Activated naive CD4-positive, alpha-beta T cell treated with anti-CD3 and anti-CD28 coated beads for 36 hours (primary cell): ENCODE measurements at regions of chr6 and their contacts with region 1.

Region 1: DNA sequence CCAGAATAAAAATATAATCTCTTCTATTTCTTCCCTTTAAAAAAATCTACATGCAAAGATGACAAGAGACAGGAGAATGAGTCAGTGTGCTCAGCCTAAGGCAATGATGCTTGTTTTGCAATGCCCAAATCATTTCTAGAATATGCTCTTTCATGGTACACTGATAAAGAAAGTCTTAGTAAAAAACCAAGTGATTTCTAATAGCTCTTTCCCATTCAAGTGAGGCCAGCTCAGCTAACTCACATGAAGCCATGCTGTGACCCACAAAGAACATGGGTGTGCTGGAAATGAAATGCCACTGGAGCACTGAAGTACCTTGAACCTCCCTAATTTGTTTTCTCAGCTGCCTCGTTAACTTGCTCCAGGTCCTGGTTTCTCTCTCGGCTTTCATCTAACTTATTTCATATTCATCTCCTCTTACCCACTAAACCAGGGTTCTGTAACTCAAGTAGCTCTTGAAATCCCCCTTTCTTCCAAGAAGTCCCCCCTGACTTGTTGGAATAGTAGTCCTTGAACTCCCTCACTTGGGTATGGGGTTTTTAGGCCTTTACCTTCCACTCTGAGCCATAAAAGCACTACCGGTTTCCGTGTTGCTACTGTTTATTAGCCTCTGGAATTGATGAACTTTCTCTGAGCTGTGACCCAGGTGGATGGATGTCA is 92.7 kb downstream of the IRF4 start:
- DNase-seq: peak; percentile 83
- H3K4me3 Mint-ChIP-seq: peak overlapping the region; percentile 35
- H3K27ac Mint-ChIP-seq: peak overlapping the region; percentile 99
- H3K4me1 Mint-ChIP-seq: peaks cover 87% of the 10 kb centered on the region
- H3K27me3 Mint-ChIP-seq: no peaks in the 10 kb centered on the region

Region 2: GRCh38 chr6:399785-400534 is 84.3 kb before region 1 on chr6:
- CTCF ChIA-PET with region 1: interaction called, 5 read pairs
- intact Hi-C with region 1: loop called (anchors 1 kb)
- DNase-seq: peak; percentile 73
- H3K4me3 Mint-ChIP-seq: peak overlapping the region; percentile 56
- H3K27ac Mint-ChIP-seq: peak overlapping the region; percentile 89
- H3K4me1 Mint-ChIP-seq: peaks cover 91% of the 10 kb centered on the region
- H3K27me3 Mint-ChIP-seq: no peaks in the 10 kb centered on the region

Region 3: DNA sequence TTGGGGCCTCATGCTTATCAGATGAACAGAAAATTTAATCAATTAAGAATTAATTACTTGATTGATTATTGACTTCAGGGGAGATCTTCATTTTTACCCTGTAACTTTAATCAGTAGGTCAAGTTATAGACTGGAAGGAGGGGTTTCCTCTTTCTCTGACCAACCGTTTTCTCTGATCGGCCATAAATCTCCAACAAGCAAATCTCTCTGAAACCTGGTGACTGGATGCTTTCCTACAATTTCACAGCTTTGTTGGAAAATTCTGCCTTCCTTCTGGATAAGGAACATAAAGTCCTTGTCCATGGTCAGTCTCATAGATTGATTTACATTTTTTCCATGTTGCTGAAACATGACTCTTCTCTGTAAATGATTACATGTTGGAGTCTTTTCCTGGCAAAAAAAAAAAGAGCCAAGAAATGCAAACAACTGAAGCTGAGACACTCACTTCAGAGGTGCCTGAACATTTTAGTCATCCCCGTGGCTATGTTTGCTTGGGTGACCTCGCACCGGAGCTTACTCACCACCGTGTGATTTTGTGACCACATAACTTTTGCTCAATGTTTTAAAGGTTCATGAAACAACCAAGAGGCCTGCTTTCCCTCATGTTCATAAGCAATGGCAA is 61.7 kb before region 1 on chr6:
- CTCF ChIA-PET with region 1: no interaction called
- intact Hi-C with region 1: loop called (anchors 1 kb)
- DNase-seq: peak; percentile 91
- H3K4me3 Mint-ChIP-seq: no peak overlapping the region
- H3K27ac Mint-ChIP-seq: peak overlapping the region; percentile 81
- H3K4me1 Mint-ChIP-seq: peaks cover 31% of the 10 kb centered on the region
- H3K27me3 Mint-ChIP-seq: no peaks in the 10 kb centered on the region

Region 4: DNA sequence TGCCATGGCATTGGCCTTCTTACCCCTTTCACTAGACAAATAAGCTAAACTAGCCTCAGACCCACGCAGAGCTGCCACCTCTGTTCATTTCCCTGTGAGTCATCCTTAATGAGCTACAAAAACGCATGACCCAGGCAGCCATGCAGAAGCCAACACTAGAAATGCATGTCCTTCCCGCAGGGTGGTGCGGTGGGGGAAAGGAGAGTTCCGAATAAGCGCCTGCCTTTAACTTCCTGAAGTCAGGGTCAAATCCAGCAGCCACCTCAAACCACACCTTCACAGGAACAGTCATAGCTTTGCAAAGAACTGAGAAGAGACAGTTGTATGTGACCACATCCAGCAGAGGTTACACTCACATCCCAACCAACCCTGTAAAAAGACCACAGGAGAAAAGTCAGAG is 52.2 kb before region 1 on chr6:
- CTCF ChIA-PET with region 1: interaction called, 6 read pairs
- intact Hi-C with region 1: loop called (anchors 1 kb)
- DNase-seq: peak; percentile 88
- H3K4me3 Mint-ChIP-seq: no peak overlapping the region
- H3K27ac Mint-ChIP-seq: no peak overlapping the region
- H3K4me1 Mint-ChIP-seq: peaks cover 60% of the 10 kb centered on the region
- H3K27me3 Mint-ChIP-seq: no peaks in the 10 kb centered on the region

Region 5: GRCh38 chr6:506508-506907 is 22.3 kb after region 1 on chr6:
- CTCF ChIA-PET with region 1: interaction called, 6 read pairs
- intact Hi-C with region 1: loop called (anchors 1 kb)
- DNase-seq: peak; percentile 89
- H3K4me3 Mint-ChIP-seq: peak overlapping the region; percentile 45
- H3K27ac Mint-ChIP-seq: peak overlapping the region; percentile 99
- H3K4me1 Mint-ChIP-seq: peaks cover 95% of the 10 kb centered on the region
- H3K27me3 Mint-ChIP-seq: no peaks in the 10 kb centered on the region

Region 6: GRCh38 chr6:551405-551804 is 67.2 kb after region 1 on chr6:
- CTCF ChIA-PET with region 1: interaction called, 4 read pairs
- intact Hi-C with region 1: loop called (anchors 1 kb)
- DNase-seq: peak; percentile 56
- H3K4me3 Mint-ChIP-seq: no peak overlapping the region
- H3K27ac Mint-ChIP-seq: peak overlapping the region; percentile 79
- H3K4me1 Mint-ChIP-seq: peaks cover 57% of the 10 kb centered on the region
- H3K27me3 Mint-ChIP-seq: no peaks in the 10 kb centered on the region

Region 7: DNA sequence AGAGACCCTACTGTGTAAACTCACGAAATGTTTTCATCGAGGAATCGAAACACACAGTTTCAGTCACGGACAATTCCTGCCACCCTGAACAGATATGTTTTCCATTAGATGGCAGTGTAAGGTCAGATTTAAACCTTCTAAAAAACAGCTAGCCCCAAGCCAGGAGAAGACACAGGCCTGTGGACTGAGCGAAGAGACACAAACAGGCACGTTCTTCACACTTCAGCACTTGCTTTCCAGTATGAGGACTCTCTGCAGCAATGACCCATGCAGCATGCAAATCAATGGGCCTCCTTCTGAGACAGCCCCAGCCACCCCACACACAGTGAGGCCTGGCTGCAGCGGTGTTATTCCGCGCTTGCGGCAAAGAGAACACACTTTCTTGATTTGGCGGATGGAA is 140.8 kb after region 1 on chr6:
- CTCF ChIA-PET with region 1: no interaction called
- intact Hi-C with region 1: no loop called
- DNase-seq: no peak
- H3K4me3 Mint-ChIP-seq: no peak overlapping the region
- H3K27ac Mint-ChIP-seq: no peak overlapping the region
- H3K4me1 Mint-ChIP-seq: peaks cover 9% of the 10 kb centered on the region
- H3K27me3 Mint-ChIP-seq: no peaks in the 10 kb centered on the region